Stomach (tissue), 19 donors: ENCODE measurements at regions of chr17 and their contacts with region 1.

Region 1: DNA sequence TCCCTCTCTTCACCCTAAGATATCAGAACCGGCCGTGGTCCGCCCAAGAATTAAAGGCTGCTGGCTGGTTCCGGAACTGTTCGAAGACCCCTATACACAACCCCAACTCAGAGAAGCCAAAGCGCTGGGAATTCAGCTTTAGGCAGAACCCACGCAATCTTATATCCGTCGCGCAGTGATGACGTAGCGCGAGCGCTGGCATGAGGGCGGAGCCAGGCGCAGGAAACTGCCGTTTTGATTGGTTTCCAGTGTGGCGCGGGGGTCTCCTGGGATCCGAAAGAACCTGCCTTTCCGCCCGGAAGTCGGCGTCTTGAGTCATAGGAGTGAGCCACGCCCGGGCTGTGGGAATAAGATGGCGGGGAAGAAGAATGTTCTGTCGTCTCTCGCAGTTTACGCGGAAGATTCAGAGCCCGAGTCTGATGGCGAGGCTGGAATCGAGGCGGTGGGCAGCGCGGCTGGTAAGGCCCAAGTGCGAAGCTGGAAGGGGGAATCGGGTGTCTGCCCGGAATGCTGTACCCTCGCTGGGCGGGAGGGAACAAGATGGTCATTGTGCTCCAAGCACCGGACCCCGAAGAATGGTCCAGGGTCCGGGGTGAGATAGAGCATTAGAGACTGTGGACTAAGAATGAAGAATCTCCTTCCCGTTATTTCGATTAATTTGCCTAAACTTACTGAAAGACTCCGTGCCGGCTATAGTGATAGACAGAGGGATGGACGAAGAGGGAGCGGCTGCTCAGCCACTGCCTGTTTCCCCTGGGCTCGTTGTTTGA is at the starts of genes RECQL5 and SAP30BP:
- DNase-seq: peak; percentile 99
- H3K4me3 ChIP-seq: peak within 1 kb of the TSS; percentile 92 to 96 (median 94)
- H3K27ac ChIP-seq: peak within 1 kb of the TSS; percentile 84 to 98 (median 95)
- H3K4me1 ChIP-seq: peaks cover 22 to 60% (median 42%) of the 10 kb centered on the region in 4 donors
- H3K27me3 ChIP-seq: no peaks in the 10 kb centered on the region
- CTCF ChIP-seq: peak in 1 of 7 experiments; percentile 38
- EP300 ChIP-seq: no peak
- POLR2A ChIP-seq: peak in 2 of 4 donors; percentile 55 to 59
- total RNA-seq, gene RECQL5: 21.4 to 229 (median 46.7) TPM
- total RNA-seq, gene SAP30BP: 24.6 to 154 (median 72.9) TPM

Region 2: DNA sequence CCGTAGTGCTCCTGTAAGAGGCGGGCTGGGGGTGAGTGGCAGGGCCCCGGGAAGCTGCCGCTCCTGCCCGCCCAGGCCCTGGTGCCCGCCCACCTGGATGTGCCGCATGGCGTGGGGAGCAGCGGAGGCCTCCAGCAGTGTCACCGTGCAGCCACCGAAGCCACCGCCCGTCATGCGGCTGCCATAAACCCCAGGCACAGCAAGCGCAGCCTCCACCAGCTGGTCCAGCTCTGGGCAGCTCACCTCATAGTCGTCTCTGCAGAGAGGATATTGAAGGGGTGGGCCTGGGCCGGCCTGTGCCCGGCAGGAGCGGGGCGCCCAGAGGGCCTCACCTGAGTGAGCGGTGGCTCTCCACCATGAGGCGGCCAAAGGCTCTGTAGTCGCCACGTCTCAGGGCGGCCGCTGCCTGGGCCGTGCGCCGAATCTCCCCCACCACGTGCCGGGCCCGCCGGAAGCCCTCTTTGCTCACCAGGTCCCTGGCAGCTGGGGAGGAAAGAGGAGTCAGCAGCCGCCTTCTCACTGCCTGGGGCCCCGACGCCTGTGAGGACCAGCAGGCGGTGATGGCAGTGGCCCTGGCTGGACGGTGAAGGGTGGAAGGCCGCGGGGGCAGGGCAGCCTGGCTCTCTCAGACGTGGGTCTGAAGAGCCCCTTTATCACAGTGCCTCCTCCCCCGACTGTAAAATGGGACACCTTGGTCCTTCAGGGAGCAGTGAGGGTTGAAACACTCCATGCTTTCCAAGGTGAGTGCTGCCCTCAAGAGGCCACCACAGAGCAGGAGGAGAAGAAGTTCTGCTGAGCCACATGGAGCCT is 91.1 kb after region 1 on chr17:
- intact Hi-C with region 1: loop called (anchors 5 kb)
- DNase-seq: no peak
- H3K4me3 ChIP-seq: no peak overlapping the region
- H3K27ac ChIP-seq: peak overlapping the region in 2 of 5 donors; percentile 33 to 46
- H3K4me1 ChIP-seq: peaks cover 9 to 33% (median 20%) of the 10 kb centered on the region in 4 donors
- H3K27me3 ChIP-seq: no peaks in the 10 kb centered on the region
- CTCF ChIP-seq: no peak
- EP300 ChIP-seq: no peak
- POLR2A ChIP-seq: no peak